Panc1 (cell line): ENCODE measurements at regions of chr9 and their contacts with region 1.

Region 1: DNA sequence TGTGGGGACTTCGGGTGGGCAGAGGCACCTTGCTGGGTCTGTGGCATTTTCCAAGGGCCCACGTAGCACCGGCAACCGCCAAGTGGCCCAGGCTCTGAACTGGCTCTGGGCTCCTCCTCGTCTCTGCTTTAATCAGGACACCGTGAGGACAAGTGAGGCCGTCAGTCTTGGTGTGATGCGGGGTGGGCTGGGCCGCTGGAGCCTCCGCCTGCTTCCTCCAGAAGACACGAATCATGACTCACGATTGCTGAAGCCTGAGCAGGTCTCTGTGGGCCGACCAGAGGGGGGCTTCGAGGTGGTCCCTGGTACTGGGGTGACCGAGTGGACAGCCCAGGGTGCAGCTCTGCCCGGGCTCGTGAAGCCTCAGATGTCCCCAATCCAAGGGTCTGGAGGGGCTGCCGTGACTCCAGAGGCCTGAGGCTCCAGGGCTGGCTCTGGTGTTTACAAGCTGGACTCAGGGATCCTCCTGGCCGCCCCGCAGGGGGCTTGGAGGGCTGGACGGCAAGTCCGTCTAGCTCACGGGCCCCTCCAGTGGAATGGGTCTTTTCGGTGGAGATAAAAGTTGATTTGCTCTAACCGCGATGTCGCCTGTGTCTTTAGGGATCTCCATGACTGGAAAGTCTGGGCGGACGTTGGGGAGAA is 5.8 kb downstream of the DPP7 start:
- DNase-seq: no peak
- ATAC-seq: no peak
- H3K4me3 ChIP-seq: no peak overlapping the region
- H3K27ac ChIP-seq: no peak overlapping the region
- H3K4me1 ChIP-seq: no peaks in the 10 kb centered on the region
- H3K27me3 ChIP-seq: no peaks in the 10 kb centered on the region
- CTCF ChIP-seq: no peak

Region 2: GRCh38 chr9:136930014-136930413 is 178.7 kb before region 1 on chr9:
- CTCF ChIA-PET with region 1: no interaction called
- POLR2A ChIA-PET with region 1: interaction called, 15 read pairs
- in situ Hi-C with region 1: no loop called
- intact Hi-C with region 1: no loop called
- DNase-seq: no peak
- ATAC-seq: no peak
- H3K4me3 ChIP-seq: no peak overlapping the region
- H3K27ac ChIP-seq: no peak overlapping the region
- H3K4me1 ChIP-seq: no peaks in the 10 kb centered on the region
- H3K27me3 ChIP-seq: no peaks in the 10 kb centered on the region
- CTCF ChIP-seq: no peak

Region 3: DNA sequence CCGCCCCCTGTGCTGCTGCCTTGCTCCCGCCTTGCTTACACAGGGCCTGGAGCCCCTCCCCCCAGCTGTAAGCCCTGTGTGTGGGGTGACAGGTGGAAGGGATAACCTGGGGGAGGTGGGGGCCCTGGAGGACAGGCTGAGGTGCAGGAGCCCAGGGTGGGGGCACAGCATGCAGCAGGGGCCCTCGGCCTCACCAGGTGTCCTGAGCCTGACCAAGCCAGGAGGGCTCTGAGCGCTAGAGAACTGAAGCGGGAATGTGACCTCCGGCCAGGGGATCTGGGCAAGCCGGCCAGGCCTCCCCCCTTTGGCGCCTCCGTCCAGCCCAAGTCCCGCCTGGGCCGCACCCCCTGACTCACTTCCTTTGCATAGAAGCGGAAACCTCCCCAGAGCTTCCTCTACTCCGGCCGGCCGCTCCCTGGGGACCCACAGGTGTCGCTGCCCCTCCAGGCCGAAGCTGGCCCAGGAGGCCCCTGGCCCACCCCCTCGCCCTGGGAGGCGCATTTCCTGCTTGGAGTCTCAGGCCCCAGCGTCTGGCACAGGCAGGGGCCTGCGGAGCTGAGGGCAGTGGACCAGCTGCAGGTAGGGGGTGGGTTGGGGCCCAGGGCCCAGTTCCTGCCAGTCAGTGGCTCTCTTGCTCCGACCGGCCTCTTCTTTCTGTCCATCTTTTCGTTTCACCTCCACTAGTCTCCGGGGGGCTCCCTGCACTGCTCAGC is 168.8 kb after region 1 on chr9 and contains the start of gene TOR4A:
- CTCF ChIA-PET with region 1: no interaction called
- POLR2A ChIA-PET with region 1: no interaction called
- in situ Hi-C with region 1: no loop called
- intact Hi-C with region 1: no loop called
- DNase-seq: no peak
- ATAC-seq: peak; percentile 89
- H3K4me3 ChIP-seq: peak within 1 kb of the TSS; percentile 55 to 73
- H3K27ac ChIP-seq: peak within 1 kb of the TSS; percentile 84
- H3K4me1 ChIP-seq: peaks cover 13% of the 10 kb centered on the region
- H3K27me3 ChIP-seq: no peaks in the 10 kb centered on the region
- CTCF ChIP-seq: peak; percentile 64
- total RNA-seq, gene TOR4A: 37.1 TPM